ENCODE measurements at regions of chr6 and their contacts with region 1.

Region 1: GRCh38 chr6:158220786-158221442 is 52.8 kb downstream of the GTF2H5 start:
- DNase-seq: peak; percentile 81
- ATAC-seq: peak; percentile 94
- H3K4me3 ChIP-seq: no peak overlapping the region
- H3K4me3 Mint-ChIP-seq: no peak overlapping the region
- H3K27ac ChIP-seq: no peak overlapping the region
- H3K27ac Mint-ChIP-seq: peak overlapping the region; percentile 65
- H3K4me1 ChIP-seq: no peaks in the 10 kb centered on the region
- H3K4me1 Mint-ChIP-seq: peaks cover 2% of the 10 kb centered on the region
- H3K27me3 ChIP-seq: no peaks in the 10 kb centered on the region
- H3K27me3 Mint-ChIP-seq: no peaks in the 10 kb centered on the region
- CTCF ChIP-seq: peak; percentile 98

Region 2: DNA sequence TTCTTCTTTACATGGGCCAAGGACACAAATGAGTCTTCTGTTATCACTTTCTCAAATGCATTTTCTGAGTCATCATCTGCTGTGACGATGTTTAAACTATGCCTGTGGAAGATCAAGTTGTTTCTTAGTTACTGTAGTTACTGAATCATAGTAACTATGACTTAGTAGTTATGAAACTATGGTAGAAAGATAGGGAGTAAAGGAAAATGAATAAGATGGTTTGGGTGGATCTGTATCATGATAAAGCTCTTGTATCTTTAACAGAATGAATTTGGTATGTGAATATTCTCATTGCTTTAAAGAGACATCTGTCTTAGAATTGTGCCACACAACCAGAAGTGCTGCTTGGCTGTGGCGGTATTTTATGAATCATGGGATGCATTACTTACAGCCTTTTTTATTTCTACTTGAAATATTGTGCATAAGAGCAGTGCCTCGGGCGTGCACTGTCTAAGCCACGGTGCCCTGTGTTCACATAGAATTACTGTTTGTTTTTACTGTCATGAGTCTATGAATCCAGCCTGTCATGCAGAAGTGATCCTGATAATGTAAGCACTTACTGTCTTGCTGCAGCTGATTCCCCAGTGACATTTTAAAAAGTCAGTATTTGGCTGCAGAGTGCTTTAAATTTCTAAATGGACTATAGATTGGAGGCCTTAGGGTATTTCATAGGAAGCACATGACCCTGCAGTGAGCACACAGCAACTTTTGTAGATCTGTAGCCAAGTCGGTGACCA is 1112.8 kb before region 1 on chr6:
- CTCF ChIA-PET with region 1: no interaction called
- POLR2A ChIA-PET with region 1: no interaction called
- intact Hi-C with region 1: no loop called
- DNase-seq: no peak
- ATAC-seq: no peak
- H3K4me3 ChIP-seq: no peak overlapping the region
- H3K4me3 Mint-ChIP-seq: no peak overlapping the region
- H3K27ac ChIP-seq: no peak overlapping the region
- H3K27ac Mint-ChIP-seq: no peak overlapping the region
- H3K4me1 ChIP-seq: peaks cover 11 to 12% of the 10 kb centered on the region in 2 donors
- H3K4me1 Mint-ChIP-seq: peaks cover 34% of the 10 kb centered on the region
- H3K27me3 ChIP-seq: no peaks in the 10 kb centered on the region
- H3K27me3 Mint-ChIP-seq: no peaks in the 10 kb centered on the region
- CTCF ChIP-seq: no peak

Region 3: DNA sequence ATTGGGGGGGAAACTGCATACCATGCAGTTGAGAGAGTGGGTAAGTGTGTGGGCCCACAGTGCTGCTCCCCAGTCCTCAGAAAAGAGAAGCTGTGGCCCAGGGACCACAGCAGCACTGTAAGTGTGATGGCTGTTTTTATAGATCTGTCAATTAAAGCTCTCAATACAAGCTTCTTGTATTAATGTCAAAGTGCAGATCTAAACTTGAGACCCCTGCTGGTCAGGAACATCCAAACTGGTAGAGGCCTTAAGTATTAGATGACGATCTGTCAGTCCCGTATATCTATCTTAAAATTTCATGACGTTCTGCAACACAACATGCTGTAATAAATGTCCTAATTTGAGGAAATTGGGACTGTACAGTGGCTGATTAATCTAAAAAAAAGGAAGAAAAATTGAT is 166.1 kb after region 1 on chr6:
- CTCF ChIA-PET with region 1: interaction called, 88 read pairs
- POLR2A ChIA-PET with region 1: no interaction called
- intact Hi-C with region 1: loop called (anchors 1 kb)
- DNase-seq: peak; percentile 54
- ATAC-seq: peak; percentile 43
- H3K4me3 ChIP-seq: no peak overlapping the region
- H3K4me3 Mint-ChIP-seq: no peak overlapping the region
- H3K27ac ChIP-seq: no peak overlapping the region
- H3K27ac Mint-ChIP-seq: no peak overlapping the region
- H3K4me1 ChIP-seq: no peaks in the 10 kb centered on the region
- H3K4me1 Mint-ChIP-seq: peaks cover 8% of the 10 kb centered on the region
- H3K27me3 ChIP-seq: no peaks in the 10 kb centered on the region
- H3K27me3 Mint-ChIP-seq: no peaks in the 10 kb centered on the region
- CTCF ChIP-seq: peak; percentile 45

Region 4: DNA sequence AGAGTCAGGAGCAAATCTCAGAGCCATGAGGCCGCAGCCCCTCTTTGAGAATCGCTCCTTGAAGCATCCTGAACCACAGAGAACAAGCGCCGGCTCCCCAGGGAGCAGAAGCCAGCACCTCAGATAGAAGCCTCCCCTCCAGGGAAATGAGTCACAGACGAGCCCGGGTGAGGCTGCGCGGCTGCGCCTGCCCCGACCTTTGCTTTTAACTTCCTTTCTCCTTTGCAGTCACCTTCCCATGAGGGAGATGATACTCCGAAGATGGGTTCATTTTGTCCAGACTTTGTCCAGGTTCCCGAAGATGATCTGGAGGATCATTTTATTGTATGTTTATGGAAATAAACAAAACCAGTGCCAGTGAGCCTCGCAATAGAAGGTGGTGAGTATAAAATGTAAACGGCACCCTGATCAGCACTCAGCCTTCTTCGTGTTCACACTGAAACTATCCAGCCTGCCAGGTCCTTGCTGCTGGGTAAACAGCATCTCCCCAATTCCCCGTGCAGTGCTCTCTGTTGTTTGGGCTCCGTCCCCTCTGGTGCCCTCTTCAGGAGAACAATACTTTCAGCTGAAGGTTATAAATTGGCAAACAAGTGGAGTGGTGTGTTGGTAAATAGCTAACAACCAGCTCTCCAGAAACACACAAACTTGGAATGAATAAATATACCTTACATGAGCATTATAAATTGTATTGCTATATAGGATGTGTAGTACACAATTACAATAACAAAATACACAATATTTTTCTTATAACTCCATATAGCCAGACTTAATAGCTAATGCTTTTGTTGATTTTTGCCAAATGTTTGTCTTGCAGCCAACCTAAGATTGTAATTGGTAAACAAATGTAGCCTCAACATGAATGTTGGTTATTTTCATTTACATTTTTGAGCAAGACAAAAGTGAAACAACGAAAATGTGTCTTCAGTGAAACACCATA is 297.5 kb after region 1 on chr6:
- CTCF ChIA-PET with region 1: interaction called, 12 read pairs
- POLR2A ChIA-PET with region 1: no interaction called
- intact Hi-C with region 1: loop called (anchors 1 kb)
- DNase-seq: peak; percentile 60
- ATAC-seq: peak; percentile 91
- H3K4me3 ChIP-seq: peak overlapping the region; percentile 2 to 44 (median 23)
- H3K4me3 Mint-ChIP-seq: peak overlapping the region; percentile 82
- H3K27ac ChIP-seq: no peak overlapping the region
- H3K27ac Mint-ChIP-seq: peak overlapping the region; percentile 32
- H3K4me1 ChIP-seq: peaks cover 12 to 19% of the 10 kb centered on the region in 2 donors
- H3K4me1 Mint-ChIP-seq: peaks cover 12% of the 10 kb centered on the region
- H3K27me3 ChIP-seq: peaks cover 0 to 36% (median 14%) of the 10 kb centered on the region in 4 experiments
- H3K27me3 Mint-ChIP-seq: peaks cover 43% of the 10 kb centered on the region
- CTCF ChIP-seq: peak; percentile 43

Region 5: DNA sequence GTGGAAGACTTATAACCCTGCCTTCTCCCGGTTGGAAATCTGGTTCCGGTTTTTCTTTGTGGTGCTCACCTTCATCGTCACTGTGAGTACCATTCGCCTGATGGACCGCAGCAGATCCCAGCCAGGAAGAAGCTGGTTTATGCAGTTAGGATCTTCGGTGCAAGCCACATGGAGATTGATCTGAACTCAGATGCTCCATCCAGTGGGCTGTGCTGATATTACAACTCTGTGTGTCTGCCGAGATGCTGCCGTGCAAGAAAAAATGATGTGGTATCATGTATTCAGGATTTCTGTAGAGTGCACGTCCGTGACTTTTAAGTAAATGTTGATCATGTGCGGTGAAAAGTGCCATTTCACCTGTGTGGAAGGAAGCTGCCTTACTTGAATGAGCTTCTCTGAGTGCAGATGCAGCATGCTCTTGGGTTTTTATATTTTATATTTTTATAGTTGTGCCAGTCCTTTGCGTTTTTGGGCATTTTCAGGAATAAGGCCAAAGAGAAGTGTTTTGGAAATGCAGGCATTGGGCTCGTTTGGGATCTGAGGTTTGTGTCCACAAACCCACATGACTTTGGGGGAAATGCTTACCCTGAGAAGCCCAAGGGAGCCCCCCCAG is 384.5 kb after region 1 on chr6:
- CTCF ChIA-PET with region 1: interaction called, 86 read pairs
- POLR2A ChIA-PET with region 1: no interaction called
- intact Hi-C with region 1: no loop called
- DNase-seq: peak; percentile 68
- ATAC-seq: peak; percentile 49
- H3K4me3 ChIP-seq: no peak overlapping the region
- H3K4me3 Mint-ChIP-seq: no peak overlapping the region
- H3K27ac ChIP-seq: no peak overlapping the region
- H3K27ac Mint-ChIP-seq: no peak overlapping the region
- H3K4me1 ChIP-seq: no peaks in the 10 kb centered on the region
- H3K4me1 Mint-ChIP-seq: no peaks in the 10 kb centered on the region
- H3K27me3 ChIP-seq: no peaks in the 10 kb centered on the region
- H3K27me3 Mint-ChIP-seq: no peaks in the 10 kb centered on the region
- CTCF ChIP-seq: peak; percentile 79

Measured in B cell (primary cell).